ENCODE measurements at regions of chr12 and their contacts with region 1.

Region 1: GRCh38 chr12:125528281-125528680 is 463.0 kb downstream of the AACS start:
- DNase-seq: peak in 9 of 10 donors; percentile 23 to 83 (median 60)
- H3K4me3 ChIP-seq: peak overlapping the region in 1 of 59 donors; percentile 31
- H3K27ac ChIP-seq: peak overlapping the region in 58 of 59 donors; percentile 52 to 99 (median 93)
- H3K27me3 ChIP-seq: no peaks in the 10 kb centered on the region
- CTCF ChIP-seq: peak in 18 of 56 donors; percentile 7 to 51 (median 25)

Region 2: DNA sequence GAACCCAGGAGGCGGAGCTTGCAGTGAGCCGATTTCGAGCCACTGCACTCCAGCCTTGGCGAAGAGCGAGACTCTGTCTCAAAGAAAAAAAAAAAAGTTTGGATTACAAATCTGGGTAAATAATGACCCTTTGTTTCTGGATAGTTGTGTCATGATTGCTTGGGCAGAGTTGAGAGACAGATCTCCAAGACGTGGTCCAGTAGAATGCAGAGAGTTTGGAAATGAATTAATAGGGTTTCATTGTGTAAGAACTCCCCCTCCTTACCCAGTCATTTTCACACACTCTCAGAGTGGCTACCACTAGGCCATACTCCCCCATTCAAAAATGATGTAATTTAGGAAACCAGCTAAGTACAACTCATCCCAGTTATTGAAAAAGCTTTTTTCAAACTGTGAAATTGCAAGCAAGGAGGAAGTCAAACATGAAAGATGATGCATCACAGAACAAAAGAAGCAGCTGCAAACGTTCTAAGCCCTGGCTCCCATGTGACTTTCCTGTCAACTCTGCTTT is 868.8 kb after region 1 on chr12:
- intact Hi-C with region 1: loop called in 1 of 2 experiments (anchors 10 kb)
- DNase-seq: peak in 1 of 10 donors; percentile 22
- H3K4me3 ChIP-seq: peak overlapping the region in 2 of 59 donors; percentile 20 to 24
- H3K27ac ChIP-seq: peak overlapping the region in 2 of 59 donors; percentile 1 to 17
- H3K27me3 ChIP-seq: peaks cover 0 to 4% (median 0%) of the 10 kb centered on the region in 45 donors
- CTCF ChIP-seq: peak in 2 of 56 donors; percentile 13 to 15